Activated CD4-positive, alpha-beta memory T cell treated with anti-CD3 and anti-CD28 coated beads, Interleukin-2, amount 10 ng/mL, durations not matched to agents 7 days and 5 days (primary cell): ENCODE measurements at regions of chr1 and their contacts with region 1.

Region 1: DNA sequence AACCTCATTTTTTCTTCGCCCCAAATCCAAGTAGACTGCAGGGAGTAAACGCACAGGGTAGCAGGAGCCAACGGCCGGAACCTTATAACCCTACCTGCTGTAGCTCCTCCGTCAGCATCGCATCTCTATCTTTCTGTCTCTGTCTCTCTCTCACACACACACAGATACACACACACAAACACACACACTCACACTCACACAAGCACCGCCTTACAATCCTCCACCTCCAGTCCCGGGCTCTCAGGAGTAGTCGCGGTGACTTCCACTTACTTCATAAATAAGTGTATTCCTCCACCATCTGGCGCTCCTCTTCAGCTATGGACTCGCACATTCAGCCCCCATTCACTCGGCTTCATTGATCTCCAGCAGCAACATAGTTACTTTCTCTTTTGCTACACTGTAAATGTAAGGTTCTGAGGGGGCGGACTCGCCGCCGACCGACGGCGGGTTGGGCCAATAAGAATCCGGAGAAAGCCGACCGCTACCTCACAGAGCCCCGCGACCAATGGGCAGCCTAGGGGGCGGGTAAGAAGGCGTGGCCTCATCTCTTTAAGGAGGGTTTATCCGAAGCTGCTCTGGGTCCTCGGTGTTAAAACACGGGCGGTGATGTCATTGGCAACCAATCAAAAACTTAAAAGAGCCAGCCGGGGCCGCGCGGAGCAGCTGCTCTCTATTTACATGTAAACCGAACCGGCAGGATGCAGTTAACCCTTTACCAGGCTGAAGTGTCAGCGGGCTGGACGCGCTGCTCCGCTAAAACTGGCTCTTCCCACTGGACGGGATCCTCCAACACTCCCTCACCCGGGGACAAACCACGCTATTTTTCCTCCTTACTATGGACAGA is at the start of gene DUSP10:
- DNase-seq: peak; percentile 99
- H3K4me3 Mint-ChIP-seq: no peak within 1 kb of the TSS
- H3K27ac Mint-ChIP-seq: peak within 1 kb of the TSS; percentile 82
- H3K4me1 Mint-ChIP-seq: peaks cover 11% of the 10 kb centered on the region
- H3K27me3 Mint-ChIP-seq: no peaks in the 10 kb centered on the region
- total RNA-seq, gene DUSP10: 18.8 to 20.5 TPM

Region 2: GRCh38 chr1:221157026-221157761 is 584.7 kb before region 1 on chr1:
- CTCF ChIA-PET with region 1: no interaction called
- POLR2A ChIA-PET with region 1: no interaction called
- DNase-seq: no peak
- H3K4me3 Mint-ChIP-seq: no peak overlapping the region
- H3K27ac Mint-ChIP-seq: no peak overlapping the region
- H3K4me1 Mint-ChIP-seq: no peaks in the 10 kb centered on the region
- H3K27me3 Mint-ChIP-seq: no peaks in the 10 kb centered on the region

Region 3: GRCh38 chr1:221478050-221478949 is 263.6 kb before region 1 on chr1:
- CTCF ChIA-PET with region 1: interaction called, 15 read pairs
- POLR2A ChIA-PET with region 1: interaction called, 8 read pairs
- DNase-seq: peak; percentile 58
- H3K4me3 Mint-ChIP-seq: no peak overlapping the region
- H3K27ac Mint-ChIP-seq: no peak overlapping the region
- H3K4me1 Mint-ChIP-seq: peaks cover 2% of the 10 kb centered on the region
- H3K27me3 Mint-ChIP-seq: peaks cover 7% of the 10 kb centered on the region

Region 4: GRCh38 chr1:221689138-221689537 is 52.8 kb before region 1 on chr1:
- CTCF ChIA-PET with region 1: interaction called, 3 read pairs
- POLR2A ChIA-PET with region 1: interaction called, 33 read pairs
- DNase-seq: no peak
- H3K4me3 Mint-ChIP-seq: no peak overlapping the region
- H3K27ac Mint-ChIP-seq: peak overlapping the region; percentile 22
- H3K4me1 Mint-ChIP-seq: peaks cover 42% of the 10 kb centered on the region
- H3K27me3 Mint-ChIP-seq: no peaks in the 10 kb centered on the region

Region 5: GRCh38 chr1:221718381-221719277 is 23.3 kb before region 1 on chr1:
- CTCF ChIA-PET with region 1: interaction called, 82 read pairs
- POLR2A ChIA-PET with region 1: interaction called, 299 read pairs
- DNase-seq: no peak
- H3K4me3 Mint-ChIP-seq: no peak overlapping the region
- H3K27ac Mint-ChIP-seq: no peak overlapping the region
- H3K4me1 Mint-ChIP-seq: peaks cover 43% of the 10 kb centered on the region
- H3K27me3 Mint-ChIP-seq: no peaks in the 10 kb centered on the region

Region 6: DNA sequence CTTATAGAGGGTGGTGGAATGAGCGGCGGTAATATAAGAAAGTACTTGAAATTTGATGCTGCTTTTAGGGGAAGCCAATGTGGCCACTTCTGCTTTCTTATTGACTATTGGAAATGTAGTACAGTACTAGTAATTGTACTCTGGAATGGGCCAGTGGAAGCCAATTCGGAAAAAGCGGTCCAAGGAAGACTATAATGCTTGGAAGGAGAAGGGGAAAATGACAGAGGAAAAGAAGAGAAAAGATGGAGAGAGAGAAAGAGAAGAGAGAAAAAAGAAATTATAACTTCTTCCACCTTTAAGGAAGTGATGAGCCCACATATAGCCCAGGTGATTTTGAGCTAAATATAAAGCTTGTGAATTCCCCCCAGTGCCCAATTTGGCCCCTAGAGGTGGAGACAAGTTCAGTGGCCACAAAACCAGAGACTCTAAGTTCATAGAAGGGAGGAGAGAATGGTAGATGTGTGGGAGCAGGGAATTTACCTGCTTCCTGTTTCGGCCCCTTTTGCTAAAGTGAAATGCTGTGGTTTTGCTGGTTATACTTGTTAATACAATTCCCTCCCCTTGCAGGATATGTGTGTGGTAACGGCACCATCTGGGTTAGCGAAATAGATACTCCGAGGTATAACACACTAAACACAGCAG is 35.6 kb after region 1 on chr1:
- CTCF ChIA-PET with region 1: interaction called, 7 read pairs
- POLR2A ChIA-PET with region 1: interaction called, 29 read pairs
- DNase-seq: peak; percentile 67
- H3K4me3 Mint-ChIP-seq: peak overlapping the region; percentile 42
- H3K27ac Mint-ChIP-seq: peak overlapping the region; percentile 91
- H3K4me1 Mint-ChIP-seq: peaks cover 75% of the 10 kb centered on the region
- H3K27me3 Mint-ChIP-seq: no peaks in the 10 kb centered on the region

Region 7: GRCh38 chr1:221839796-221840395 is 98.0 kb after region 1 on chr1:
- CTCF ChIA-PET with region 1: interaction called, 3 read pairs
- POLR2A ChIA-PET with region 1: interaction called, 10 read pairs
- DNase-seq: peak; percentile 77
- H3K4me3 Mint-ChIP-seq: no peak overlapping the region
- H3K27ac Mint-ChIP-seq: peak overlapping the region; percentile 71
- H3K4me1 Mint-ChIP-seq: peaks cover 44% of the 10 kb centered on the region
- H3K27me3 Mint-ChIP-seq: no peaks in the 10 kb centered on the region

Region 8: DNA sequence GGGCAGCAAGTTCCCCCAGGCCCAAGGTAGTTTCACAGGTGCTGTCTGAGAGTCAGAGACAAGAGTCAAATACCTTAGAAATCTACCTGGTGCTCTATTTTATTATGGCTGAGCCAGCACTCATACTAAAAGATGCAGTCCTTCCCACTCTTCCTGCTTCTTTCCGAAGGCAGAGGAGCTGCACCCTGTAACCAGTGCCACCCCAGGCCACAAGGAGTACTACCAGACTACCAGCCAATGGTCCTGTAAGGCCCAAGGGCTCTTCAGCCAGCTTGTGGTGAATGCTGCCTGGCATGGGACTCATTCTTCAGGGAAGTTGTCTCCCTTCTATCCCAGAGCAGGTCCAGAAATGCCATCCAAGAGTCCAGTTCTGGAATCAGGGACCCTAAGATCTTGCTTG is 203.7 kb after region 1 on chr1:
- CTCF ChIA-PET with region 1: no interaction called
- POLR2A ChIA-PET with region 1: no interaction called
- DNase-seq: no peak
- H3K4me3 Mint-ChIP-seq: no peak overlapping the region
- H3K27ac Mint-ChIP-seq: no peak overlapping the region
- H3K4me1 Mint-ChIP-seq: no peaks in the 10 kb centered on the region
- H3K27me3 Mint-ChIP-seq: peaks cover 2% of the 10 kb centered on the region